Heart right ventricle (tissue), 16 donors: ENCODE measurements at regions of chr3 and their contacts with region 1.

Region 1: DNA sequence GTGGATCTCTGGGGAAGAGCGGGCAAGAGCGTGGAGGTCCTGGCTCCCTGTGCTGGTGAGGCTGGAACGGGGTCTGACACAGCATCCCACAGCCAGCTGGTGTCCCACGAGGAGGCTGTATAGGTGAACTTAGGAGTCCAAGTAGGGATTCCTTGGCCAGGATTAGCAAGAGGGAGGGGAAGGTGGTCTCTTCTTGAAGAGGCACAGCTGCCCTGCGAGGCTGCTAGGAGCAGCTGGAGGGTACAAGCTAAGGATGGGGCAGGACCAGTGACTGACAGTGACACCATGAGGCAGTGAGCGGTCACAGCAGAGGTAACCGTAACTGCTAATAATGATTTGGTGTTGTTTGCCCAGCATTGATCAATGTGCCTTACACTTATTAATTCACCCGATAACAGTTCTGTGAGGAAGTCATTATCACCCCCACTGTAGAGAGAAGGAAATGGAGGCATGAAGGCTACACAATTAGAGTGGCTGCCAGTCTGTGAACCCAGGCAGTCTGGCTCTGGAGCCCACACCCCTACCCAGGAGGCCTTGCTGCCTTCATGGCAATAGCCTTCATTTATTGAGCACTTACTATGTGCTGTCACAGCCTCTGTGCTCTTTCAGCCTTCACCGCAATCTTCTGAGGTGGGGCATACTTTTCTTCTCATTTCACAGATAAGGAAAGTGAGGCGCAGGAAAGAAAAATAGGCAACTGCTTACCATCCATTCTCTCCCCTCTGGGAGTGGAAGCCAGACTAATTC is 59.4 kb downstream of the TMEM44 start:
- DNase-seq: peak; percentile 25 to 53
- ATAC-seq: peak; percentile 53 to 75 (median 69)
- H3K4me3 ChIP-seq: no peak overlapping the region
- H3K27ac ChIP-seq: peak overlapping the region in 6 of 10 donors; percentile 75 to 93 (median 86)
- H3K4me1 ChIP-seq: peaks cover 20 to 74% (median 43%) of the 10 kb centered on the region in 9 donors
- H3K27me3 ChIP-seq: no peaks in the 10 kb centered on the region
- CTCF ChIP-seq: peak in 7 of 9 donors; percentile 53 to 73 (median 66)

Region 2: GRCh38 chr3:194472290-194472920 is 101.5 kb before region 1 on chr3:
- intact Hi-C with region 1: loop called in 7 of 10 experiments (anchors 2 to 5 kb)
- DNase-seq: peak in 1 of 2 donors; percentile 33
- ATAC-seq: peak in 7 of 8 donors; percentile 41 to 77 (median 56)
- H3K4me3 ChIP-seq: no peak overlapping the region
- H3K27ac ChIP-seq: peak overlapping the region in 3 of 10 donors; percentile 6 to 66 (median 37)
- H3K4me1 ChIP-seq: peaks cover 0 to 95% (median 52%) of the 10 kb centered on the region in 9 donors
- H3K27me3 ChIP-seq: no peaks in the 10 kb centered on the region
- CTCF ChIP-seq: peak; percentile 92 to 99 (median 95)

Region 3: GRCh38 chr3:194486540-194487288 is 87.2 kb before region 1 on chr3 and contains the start of gene ATP13A3:
- intact Hi-C with region 1: loop called in 6 of 10 experiments (anchors 2 to 10 kb)
- DNase-seq: peak; percentile 89
- ATAC-seq: peak; percentile 91 to 97 (median 96)
- H3K4me3 ChIP-seq: peak within 1 kb of the TSS; percentile 54 to 87 (median 77)
- H3K27ac ChIP-seq: peak within 1 kb of the TSS; percentile 71 to 96 (median 91)
- H3K4me1 ChIP-seq: peaks cover 0 to 74% (median 37%) of the 10 kb centered on the region in 9 donors
- H3K27me3 ChIP-seq: no peaks in the 10 kb centered on the region
- CTCF ChIP-seq: no peak
- total RNA-seq, gene ATP13A3: 60.3 to 195 (median 109) TPM

Region 4: DNA sequence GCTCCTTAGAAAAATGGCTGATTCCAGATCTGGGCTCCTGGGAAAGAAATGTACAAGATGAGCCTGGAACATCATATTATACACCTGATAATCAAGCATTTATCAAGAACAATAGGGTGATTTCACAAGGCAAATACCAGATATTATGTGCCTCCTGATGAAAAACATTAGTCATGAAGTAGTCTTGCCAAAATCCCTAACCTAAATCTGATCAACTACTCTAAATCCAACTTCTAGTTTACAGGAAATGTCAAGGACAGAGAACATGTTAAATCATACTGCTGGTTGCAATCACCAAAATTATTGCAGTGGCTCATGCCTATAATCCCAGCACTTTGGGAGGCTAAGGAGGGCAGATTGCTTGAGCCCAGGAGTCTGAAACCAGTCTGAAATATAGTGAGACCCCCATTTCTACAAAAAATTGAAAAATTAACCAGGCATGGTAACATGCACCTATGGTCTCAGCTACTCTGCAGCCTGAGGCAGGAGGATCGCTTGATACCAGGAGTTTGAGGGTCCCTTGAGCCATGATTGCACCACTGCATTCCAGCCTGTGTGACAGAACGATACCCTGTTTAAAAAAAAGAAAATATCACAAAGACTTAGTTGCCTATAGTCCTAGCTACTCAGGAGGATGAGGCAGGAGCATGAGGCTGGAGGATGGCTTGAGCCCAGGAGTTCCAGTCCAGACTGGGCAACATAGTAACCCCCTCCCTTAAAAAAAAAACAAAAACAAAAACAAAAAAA is 52.2 kb before region 1 on chr3:
- intact Hi-C with region 1: loop called in 1 of 10 experiments (anchors 5 kb)
- DNase-seq: no peak
- ATAC-seq: peak in 2 of 8 donors; percentile 22 to 43
- H3K4me3 ChIP-seq: no peak overlapping the region
- H3K27ac ChIP-seq: peak overlapping the region in 1 of 10 donors; percentile 59
- H3K4me1 ChIP-seq: peaks cover 0 to 36% (median 8%) of the 10 kb centered on the region in 9 donors
- H3K27me3 ChIP-seq: no peaks in the 10 kb centered on the region
- CTCF ChIP-seq: no peak